ENCODE measurements at regions of chr17 and their contacts with region 1.

Region 1: GRCh38 chr17:55086635-55087058 is 118.1 kb downstream of the STXBP4 start:
- DNase-seq: no peak
- ATAC-seq: peak; percentile 49 to 81 (median 74)
- H3K4me3 ChIP-seq: no peak overlapping the region
- H3K27ac ChIP-seq: no peak overlapping the region
- H3K4me1 ChIP-seq: peaks cover 0 to 10% (median 4%) of the 10 kb centered on the region in 9 donors
- H3K27me3 ChIP-seq: no peaks in the 10 kb centered on the region
- CTCF ChIP-seq: no peak

Region 2: GRCh38 chr17:55157136-55157535 is 70.5 kb after region 1 on chr17:
- intact Hi-C with region 1: loop called in 1 of 10 experiments (anchors 10 kb)
- DNase-seq: no peak
- ATAC-seq: peak in 4 of 8 donors; percentile 48 to 72 (median 66)
- H3K4me3 ChIP-seq: no peak overlapping the region
- H3K27ac ChIP-seq: no peak overlapping the region
- H3K4me1 ChIP-seq: peaks cover 0 to 12% (median 5%) of the 10 kb centered on the region in 9 donors
- H3K27me3 ChIP-seq: no peaks in the 10 kb centered on the region
- CTCF ChIP-seq: no peak

Region 3: DNA sequence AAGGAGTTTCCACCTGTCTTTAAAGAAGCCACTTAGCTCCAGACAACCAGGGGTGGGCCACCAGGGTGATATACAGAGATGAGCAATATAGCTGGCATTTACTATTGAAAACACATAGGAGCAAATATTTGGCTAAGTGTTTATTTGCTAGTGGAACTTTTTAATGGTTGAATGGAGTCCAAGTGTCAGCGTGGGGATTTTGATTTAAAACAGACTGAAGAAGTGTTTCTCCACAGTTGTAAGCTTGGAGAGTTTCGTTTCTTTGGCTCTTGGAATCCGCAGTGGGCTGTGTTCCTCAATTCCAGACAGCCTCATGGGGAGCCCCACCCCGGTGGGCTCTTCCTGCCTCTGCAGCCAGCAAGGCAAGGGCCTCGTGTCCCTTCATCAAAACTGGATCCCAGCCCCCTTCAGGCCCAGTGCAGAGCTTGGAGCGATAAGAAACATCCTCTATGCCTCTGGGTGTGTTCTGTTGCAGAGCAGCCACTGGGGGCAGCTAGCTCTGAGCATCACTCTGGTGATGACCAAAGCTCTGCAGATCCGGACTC is 1543.0 kb after region 1 on chr17:
- intact Hi-C with region 1: loop called in 1 of 10 experiments (anchors 10 kb)
- DNase-seq: no peak
- ATAC-seq: no peak
- H3K4me3 ChIP-seq: no peak overlapping the region
- H3K27ac ChIP-seq: no peak overlapping the region
- H3K4me1 ChIP-seq: no peaks in the 10 kb centered on the region
- H3K27me3 ChIP-seq: peaks cover 0 to 41% (median 9%) of the 10 kb centered on the region in 7 donors
- CTCF ChIP-seq: peak in 1 of 9 donors; percentile 27